Activated naive CD4-positive, alpha-beta T cell treated with anti-CD3 and anti-CD28 coated beads for 36 hours (primary cell): ENCODE measurements at regions of chr12 and their contacts with region 1.

Region 1: DNA sequence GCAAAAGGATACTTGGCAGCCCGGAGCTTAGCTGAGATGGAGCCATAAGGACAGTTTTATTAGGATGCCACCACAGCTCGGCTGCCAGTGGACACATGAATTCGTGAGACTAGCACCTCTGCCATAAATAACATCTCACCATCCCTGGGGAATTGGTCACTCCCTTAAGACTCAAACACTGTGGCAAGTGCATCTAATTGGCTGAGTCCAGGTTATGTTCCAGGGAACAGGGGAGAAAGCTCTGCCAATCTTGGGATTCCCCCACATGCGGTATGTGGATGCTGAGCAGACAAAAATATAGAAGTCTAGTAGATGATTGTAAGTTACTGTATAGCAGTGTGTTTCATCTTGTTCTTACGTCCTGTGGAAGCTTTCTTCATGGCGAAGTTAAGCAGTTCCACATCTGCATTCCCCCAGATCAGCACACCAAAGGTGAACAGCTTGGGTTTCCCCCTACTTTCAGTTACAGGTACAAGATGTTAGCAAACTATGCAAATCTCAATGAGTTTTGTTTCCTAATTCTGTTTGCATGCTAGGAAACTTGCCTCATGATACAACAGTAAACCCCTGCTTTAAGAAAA is 131.1 kb downstream of the ETV6 start:
- DNase-seq: peak; percentile 68
- H3K4me3 Mint-ChIP-seq: peak overlapping the region; percentile 2
- H3K27ac Mint-ChIP-seq: peak overlapping the region; percentile 85
- H3K4me1 Mint-ChIP-seq: peaks cover 74% of the 10 kb centered on the region
- H3K27me3 Mint-ChIP-seq: no peaks in the 10 kb centered on the region

Region 2: GRCh38 chr12:11702959-11703358 is 77.7 kb before region 1 on chr12:
- CTCF ChIA-PET with region 1: interaction called, 3 read pairs
- intact Hi-C with region 1: loop called (anchors 1 kb)
- DNase-seq: peak; percentile 14
- H3K4me3 Mint-ChIP-seq: no peak overlapping the region
- H3K27ac Mint-ChIP-seq: peak overlapping the region; percentile 76
- H3K4me1 Mint-ChIP-seq: peaks cover 49% of the 10 kb centered on the region
- H3K27me3 Mint-ChIP-seq: no peaks in the 10 kb centered on the region

Region 3: GRCh38 chr12:11730299-11731041 is 50.1 kb before region 1 on chr12:
- CTCF ChIA-PET with region 1: interaction called, 8 read pairs
- intact Hi-C with region 1: loop called (anchors 1 kb)
- DNase-seq: peak; percentile 27
- H3K4me3 Mint-ChIP-seq: no peak overlapping the region
- H3K27ac Mint-ChIP-seq: peak overlapping the region; percentile 85
- H3K4me1 Mint-ChIP-seq: peaks cover 86% of the 10 kb centered on the region
- H3K27me3 Mint-ChIP-seq: no peaks in the 10 kb centered on the region

Region 4: DNA sequence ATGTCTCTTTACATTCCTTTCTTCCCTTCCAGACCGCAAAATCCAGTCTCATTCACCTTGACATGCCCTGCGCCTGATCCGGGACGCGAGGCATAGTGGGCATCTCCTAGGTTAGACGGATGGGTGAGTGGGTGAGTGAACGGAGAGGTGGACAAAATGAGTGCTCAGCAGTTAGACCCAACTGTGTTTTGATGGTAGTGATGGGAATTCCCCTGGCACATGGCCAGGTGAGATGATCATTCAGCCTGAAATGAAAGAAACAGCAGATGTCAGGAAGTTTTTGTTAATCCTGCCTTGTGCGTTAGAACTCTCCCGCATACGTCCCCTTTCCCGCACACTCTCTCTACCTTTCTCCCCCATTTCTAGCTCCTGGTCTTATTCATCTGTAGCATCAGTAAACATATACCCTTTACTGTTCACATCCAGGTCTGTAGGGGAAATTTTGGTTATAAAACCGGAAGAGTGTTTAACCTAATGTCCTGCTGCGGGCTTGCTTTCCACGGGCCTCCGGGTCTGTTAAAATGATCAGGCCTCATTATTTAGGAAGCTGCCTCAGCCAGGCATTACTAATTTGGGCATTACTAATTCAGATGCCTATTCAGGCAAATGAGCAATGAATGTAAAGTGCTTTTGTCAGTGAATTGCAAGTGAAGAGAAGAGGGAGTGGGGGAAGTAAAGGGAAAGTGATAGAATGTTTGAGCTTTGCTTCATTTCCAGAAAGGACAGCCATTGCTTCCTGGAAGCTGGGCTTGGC is 41.6 kb after region 1 on chr12:
- CTCF ChIA-PET with region 1: no interaction called
- intact Hi-C with region 1: loop called (anchors 1 kb)
- DNase-seq: peak; percentile 83
- H3K4me3 Mint-ChIP-seq: peak overlapping the region; percentile 44
- H3K27ac Mint-ChIP-seq: peak overlapping the region; percentile 91
- H3K4me1 Mint-ChIP-seq: peaks cover 61% of the 10 kb centered on the region
- H3K27me3 Mint-ChIP-seq: no peaks in the 10 kb centered on the region

Region 5: GRCh38 chr12:11901701-11902524 is 121.3 kb after region 1 on chr12:
- CTCF ChIA-PET with region 1: no interaction called
- intact Hi-C with region 1: loop called (anchors 1 kb)
- DNase-seq: peak; percentile 56
- H3K4me3 Mint-ChIP-seq: peak overlapping the region; percentile 54
- H3K27ac Mint-ChIP-seq: peak overlapping the region; percentile 79
- H3K4me1 Mint-ChIP-seq: peaks cover 35% of the 10 kb centered on the region
- H3K27me3 Mint-ChIP-seq: no peaks in the 10 kb centered on the region

Region 6: GRCh38 chr12:12070674-12071656 is 290.4 kb after region 1 on chr12 and contains the start of gene BCL2L14:
- CTCF ChIA-PET with region 1: no interaction called
- intact Hi-C with region 1: loop called (anchors 2 kb)
- DNase-seq: peak; percentile 52
- H3K4me3 Mint-ChIP-seq: peak within 1 kb of the TSS; percentile 85
- H3K27ac Mint-ChIP-seq: peak within 1 kb of the TSS; percentile 90
- H3K4me1 Mint-ChIP-seq: peaks cover 36% of the 10 kb centered on the region
- H3K27me3 Mint-ChIP-seq: no peaks in the 10 kb centered on the region
- total RNA-seq, gene BCL2L14: 19.4 to 21.8 TPM